Left cardiac atrium (tissue), 4 donors: ENCODE measurements at regions of chr6 and their contacts with region 1.

Region 1: DNA sequence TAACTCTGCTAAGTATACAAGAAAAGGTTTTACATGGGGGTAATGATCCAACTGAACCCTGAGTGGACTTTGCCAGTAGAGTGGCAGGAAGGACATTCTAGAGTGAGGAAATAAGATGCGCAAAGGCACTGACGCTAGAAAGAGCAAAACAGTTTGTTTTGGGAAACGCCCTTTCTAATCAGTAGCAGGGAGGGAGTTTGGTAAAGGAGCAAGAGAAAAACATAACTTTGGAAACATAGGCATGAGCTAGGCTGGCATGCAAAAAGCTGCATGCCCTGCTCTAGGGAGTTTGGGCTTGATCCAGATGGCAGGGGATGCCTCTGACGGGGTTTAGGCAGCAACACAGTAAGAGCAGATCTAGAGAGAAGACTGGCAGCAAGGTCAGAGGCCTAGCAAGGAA is 135.2 kb downstream of the DST start:
- DNase-seq: peak; percentile 42
- ATAC-seq: peak; percentile 71 to 83

Region 2: GRCh38 chr6:56542364-56543331 is 35.1 kb after region 1 on chr6:
- intact Hi-C with region 1: loop called in 1 of 2 experiments (anchors 5 kb)
- DNase-seq: peak; percentile 93
- ATAC-seq: peak; percentile 95 to 96

Region 3: DNA sequence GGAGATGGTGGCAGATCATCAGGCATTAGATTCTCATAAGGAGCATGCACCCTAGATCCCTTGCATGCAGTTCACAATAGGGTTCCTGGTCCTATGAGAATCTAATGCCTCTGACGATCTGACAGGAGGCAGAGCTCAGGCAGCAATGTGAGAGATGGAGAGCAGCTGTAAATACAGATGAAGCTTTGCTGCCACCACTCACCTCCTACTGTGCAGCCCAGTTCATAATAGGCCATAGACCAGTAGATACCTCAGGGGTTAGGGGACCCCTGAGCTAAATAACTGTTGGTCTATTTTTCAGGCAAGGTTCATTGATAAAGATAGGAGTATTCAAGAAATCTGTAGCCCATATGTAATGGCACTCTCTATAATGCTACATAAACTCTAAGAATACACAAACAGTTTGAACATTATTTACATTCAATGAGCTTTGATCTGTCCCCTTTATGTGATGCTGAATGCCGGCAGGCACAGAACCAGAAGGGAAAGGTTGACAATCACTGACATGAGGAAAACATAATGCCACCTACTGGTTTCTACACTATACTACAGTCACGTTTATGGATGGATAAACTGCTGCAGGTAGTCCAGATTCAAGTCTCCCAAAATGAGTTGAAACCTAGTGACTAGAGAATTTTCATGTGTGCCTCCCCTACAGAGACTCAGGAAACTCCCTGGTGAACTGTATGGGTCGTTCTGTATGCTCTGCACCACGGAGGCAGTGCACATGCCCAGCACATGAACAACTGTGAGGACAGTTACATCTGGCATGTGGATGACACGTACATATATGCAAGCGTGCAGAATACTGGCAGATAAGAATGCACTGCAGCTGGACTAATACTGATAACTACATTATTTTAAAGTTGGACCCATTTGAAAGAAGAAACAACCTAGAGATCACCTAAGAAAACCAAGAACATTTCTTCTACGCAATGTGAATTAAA is 63.2 kb after region 1 on chr6:
- intact Hi-C with region 1: no loop called
- DNase-seq: no peak
- ATAC-seq: peak; percentile 59 to 75

Region 4: GRCh38 chr6:56796196-56796532 is 288.6 kb after region 1 on chr6:
- intact Hi-C with region 1: no loop called
- DNase-seq: no peak
- ATAC-seq: no peak